Gastrocnemius medialis (tissue), 4 donors: ENCODE measurements at regions of chr5 and their contacts with region 1.

Region 1: GRCh38 chr5:61319388-61320146 is 12.5 kb upstream of the ZSWIM6 start:
- DNase-seq: no peak
- ATAC-seq: no peak
- H3K4me3 ChIP-seq: no peak overlapping the region
- H3K27ac ChIP-seq: no peak overlapping the region
- H3K4me1 ChIP-seq: peaks cover 0 to 4% of the 10 kb centered on the region in 2 donors
- H3K27me3 ChIP-seq: no peaks in the 10 kb centered on the region
- CTCF ChIP-seq: no peak
- POLR2A ChIP-seq: no peak

Region 2: DNA sequence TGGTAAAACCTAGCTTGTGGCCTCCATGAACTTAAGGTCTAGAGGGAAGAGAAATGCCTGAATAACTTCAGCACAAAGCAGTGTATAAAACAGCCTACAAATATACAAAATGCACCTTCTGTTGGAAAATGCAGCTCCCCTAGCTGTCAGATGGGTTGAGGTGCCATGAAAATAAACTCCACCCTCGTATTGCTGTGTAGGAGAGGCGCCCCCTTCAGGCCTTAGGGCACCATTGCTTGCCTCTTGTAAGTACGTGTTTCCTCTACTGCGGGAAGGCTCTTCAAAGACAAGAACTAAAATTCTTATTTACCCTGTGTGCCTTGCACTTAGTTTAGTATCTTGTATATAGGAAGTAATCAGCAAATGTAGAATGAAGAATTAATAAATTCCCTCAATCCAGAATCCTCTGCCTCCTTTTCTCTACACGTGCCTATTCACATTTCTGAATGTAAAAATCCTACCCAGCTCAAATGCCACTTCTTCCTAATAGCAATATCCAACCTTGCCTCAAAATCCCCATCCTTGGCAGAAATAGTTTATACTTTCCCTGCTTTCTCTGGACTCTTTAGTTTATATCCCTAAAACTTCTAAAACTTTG is 1032.3 kb before region 1 on chr5:
- in situ Hi-C with region 1: no loop called
- intact Hi-C with region 1: no loop called
- DNase-seq: no peak
- ATAC-seq: no peak
- H3K4me3 ChIP-seq: no peak overlapping the region
- H3K27ac ChIP-seq: no peak overlapping the region
- H3K4me1 ChIP-seq: no peaks in the 10 kb centered on the region
- H3K27me3 ChIP-seq: no peaks in the 10 kb centered on the region
- CTCF ChIP-seq: no peak
- POLR2A ChIP-seq: no peak

Region 3: GRCh38 chr5:61162010-61162831 is 157.3 kb before region 1 on chr5 and contains the start of gene SMIM15:
- in situ Hi-C with region 1: loop called in 1 of 4 experiments (anchors 10 kb)
- intact Hi-C with region 1: no loop called
- DNase-seq: peak; percentile 75 to 85
- ATAC-seq: peak; percentile 94 to 96
- H3K4me3 ChIP-seq: peak within 1 kb of the TSS; percentile 87 to 99 (median 94)
- H3K27ac ChIP-seq: peak within 1 kb of the TSS; percentile 87 to 95 (median 93)
- H3K4me1 ChIP-seq: peaks cover 14 to 26% of the 10 kb centered on the region in 2 donors
- H3K27me3 ChIP-seq: no peaks in the 10 kb centered on the region
- CTCF ChIP-seq: no peak
- POLR2A ChIP-seq: peak; percentile 42 to 68
- total RNA-seq, gene SMIM15: 6.2 to 17.1 (median 10.4) TPM

Region 4: GRCh38 chr5:61408476-61409168 is 89.1 kb after region 1 on chr5:
- in situ Hi-C with region 1: loop called in 2 of 4 experiments (anchors 10 to 25 kb)
- intact Hi-C with region 1: no loop called
- DNase-seq: peak; percentile 96 to 98
- ATAC-seq: peak; percentile 97 to 98
- H3K4me3 ChIP-seq: peak overlapping the region; percentile 35 to 41 (median 36)
- H3K27ac ChIP-seq: peak overlapping the region; percentile 44 to 66 (median 56)
- H3K4me1 ChIP-seq: peaks cover 10 to 18% of the 10 kb centered on the region in 2 donors
- H3K27me3 ChIP-seq: no peaks in the 10 kb centered on the region
- CTCF ChIP-seq: no peak
- POLR2A ChIP-seq: no peak

Region 5: DNA sequence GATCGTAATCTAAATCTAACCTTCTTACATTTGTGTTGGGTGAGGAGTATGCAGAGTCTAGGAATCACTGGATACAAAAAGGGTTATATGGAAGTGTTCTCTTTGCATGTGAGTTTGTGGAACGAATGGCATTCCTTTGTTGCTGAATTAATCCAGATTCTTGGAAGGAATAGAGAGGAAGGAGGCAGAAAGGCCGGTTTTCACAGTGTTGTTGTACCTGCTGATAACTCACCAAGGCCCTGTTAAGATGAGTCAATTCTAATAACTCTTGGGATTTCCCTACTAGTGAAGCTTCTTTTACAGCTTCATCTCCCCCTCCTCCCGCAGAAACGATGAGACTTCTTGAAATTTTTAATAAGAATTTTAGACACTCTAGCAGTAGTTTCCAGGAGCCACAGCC is 96.4 kb after region 1 on chr5:
- in situ Hi-C with region 1: loop called in 2 of 4 experiments (anchors 10 to 25 kb)
- intact Hi-C with region 1: no loop called
- DNase-seq: no peak
- ATAC-seq: no peak
- H3K4me3 ChIP-seq: no peak overlapping the region
- H3K27ac ChIP-seq: no peak overlapping the region
- H3K4me1 ChIP-seq: no peaks in the 10 kb centered on the region
- H3K27me3 ChIP-seq: no peaks in the 10 kb centered on the region
- CTCF ChIP-seq: no peak
- POLR2A ChIP-seq: no peak